CD4-positive, alpha-beta T cell (primary cell): ENCODE measurements at regions of chr6 and their contacts with region 1.

Region 1: DNA sequence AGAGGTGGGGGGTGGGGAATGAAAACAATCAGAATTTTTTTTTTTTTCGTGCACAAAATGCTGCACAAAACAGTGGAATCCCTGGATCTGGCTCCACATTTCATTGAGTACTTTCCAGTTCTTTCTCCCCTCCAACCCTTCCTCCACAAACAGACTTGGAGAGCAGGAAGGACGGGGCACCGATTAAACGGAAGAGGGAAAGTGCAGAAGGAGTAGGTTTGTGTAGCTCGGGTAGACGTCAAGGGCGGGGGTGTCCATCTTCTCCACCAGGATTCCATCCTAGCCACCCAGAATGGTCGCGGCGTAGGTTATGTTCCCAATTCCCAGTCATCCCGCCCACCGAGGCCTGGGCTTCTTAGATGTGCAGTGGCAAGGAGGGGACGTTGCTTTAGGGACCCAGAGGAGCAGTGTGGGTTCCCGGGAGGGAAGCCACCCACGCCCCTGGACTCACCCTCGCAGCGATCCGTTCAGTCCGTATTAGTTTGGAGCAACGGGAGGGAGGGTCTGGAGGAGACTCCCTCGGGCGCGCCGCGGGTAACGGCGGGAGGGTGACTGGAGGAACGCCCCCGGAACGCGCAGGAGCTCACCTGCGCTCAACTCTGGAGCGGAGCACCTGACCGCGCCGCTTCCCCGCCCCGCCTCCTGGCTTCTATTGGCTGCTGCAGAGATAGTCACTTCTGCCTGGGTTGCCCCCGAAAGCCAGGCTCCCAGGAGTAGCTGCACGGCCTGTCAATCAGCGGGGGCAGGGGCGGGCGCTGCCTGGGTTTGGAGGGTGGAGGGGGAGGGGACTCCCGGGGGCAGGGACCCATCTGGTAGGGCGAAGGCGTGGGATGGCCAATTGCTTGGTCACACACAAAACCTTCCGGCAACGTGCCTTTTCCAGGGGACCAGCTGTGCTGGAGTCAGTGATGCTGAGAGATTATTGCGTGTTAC is at the start of gene ENPP5:
- DNase-seq: peak; percentile 32 to 86 (median 56)
- ATAC-seq: peak; percentile 96
- H3K4me3 ChIP-seq: peak within 1 kb of the TSS; percentile 67
- H3K4me3 Mint-ChIP-seq: peak within 1 kb of the TSS; percentile 77
- H3K27ac ChIP-seq: no peak within 1 kb of the TSS
- H3K27ac Mint-ChIP-seq: no peak within 1 kb of the TSS
- H3K4me1 ChIP-seq: peaks cover 13% of the 10 kb centered on the region
- H3K4me1 Mint-ChIP-seq: peaks cover 27% of the 10 kb centered on the region
- H3K27me3 ChIP-seq: peaks cover 0 to 19% of the 10 kb centered on the region in 2 experiments
- H3K27me3 Mint-ChIP-seq: peaks cover 35% of the 10 kb centered on the region
- CTCF ChIP-seq: no peak
- total RNA-seq, gene ENPP5: 0.11 to 0.19 TPM

Region 2: GRCh38 chr6:46129629-46130511 is 40.8 kb before region 1 on chr6 and contains the start of gene ENPP4:
- CTCF ChIA-PET with region 1: no interaction called
- POLR2A ChIA-PET with region 1: interaction called, 18 read pairs
- intact Hi-C with region 1: no loop called
- DNase-seq: peak; percentile 79 to 97 (median 88)
- ATAC-seq: peak; percentile 99
- H3K4me3 ChIP-seq: peak within 1 kb of the TSS; percentile 99
- H3K4me3 Mint-ChIP-seq: peak within 1 kb of the TSS; percentile 96
- H3K27ac ChIP-seq: peak within 1 kb of the TSS; percentile 49 to 58
- H3K27ac Mint-ChIP-seq: peak within 1 kb of the TSS; percentile 83
- H3K4me1 ChIP-seq: peaks cover 18% of the 10 kb centered on the region
- H3K4me1 Mint-ChIP-seq: peaks cover 54% of the 10 kb centered on the region
- H3K27me3 ChIP-seq: no peaks in the 10 kb centered on the region
- H3K27me3 Mint-ChIP-seq: no peaks in the 10 kb centered on the region
- CTCF ChIP-seq: no peak
- total RNA-seq, gene ENPP4: 3.7 to 4.3 TPM

Region 3: GRCh38 chr6:46652603-46653438 is 482.2 kb after region 1 on chr6 and contains the starts of genes CYP39A1 and SLC25A27:
- CTCF ChIA-PET with region 1: no interaction called
- POLR2A ChIA-PET with region 1: no interaction called
- intact Hi-C with region 1: loop called in 1 of 2 experiments (anchors 5 kb)
- DNase-seq: peak; percentile 51 to 84 (median 66)
- ATAC-seq: peak; percentile 97
- H3K4me3 ChIP-seq: peak within 1 kb of the TSS; percentile 62
- H3K4me3 Mint-ChIP-seq: peak within 1 kb of the TSS; percentile 89
- H3K27ac ChIP-seq: no peak within 1 kb of the TSS
- H3K27ac Mint-ChIP-seq: no peak within 1 kb of the TSS
- H3K4me1 ChIP-seq: peaks cover 14% of the 10 kb centered on the region
- H3K4me1 Mint-ChIP-seq: peaks cover 15% of the 10 kb centered on the region
- H3K27me3 ChIP-seq: peaks cover 17 to 39% of the 10 kb centered on the region in 2 experiments
- H3K27me3 Mint-ChIP-seq: peaks cover 64% of the 10 kb centered on the region
- CTCF ChIP-seq: no peak
- total RNA-seq, gene CYP39A1: not detected
- total RNA-seq, gene SLC25A27: 1.2 to 1.5 TPM